Posterior cingulate gyrus (tissue), 11 donors: ENCODE measurements at regions of chr1 and their contacts with region 1.

Region 1: GRCh38 chr1:119367427-119368124 is 1.0 kb upstream of the HAO2 start:
- DNase-seq: no peak

Region 2: GRCh38 chr1:118151312-118151937 is 1216.2 kb before region 1 on chr1:
- intact Hi-C with region 1: loop called (anchors 1 kb)
- DNase-seq: peak in 6 of 10 donors; percentile 41 to 76 (median 57)

Region 3: DNA sequence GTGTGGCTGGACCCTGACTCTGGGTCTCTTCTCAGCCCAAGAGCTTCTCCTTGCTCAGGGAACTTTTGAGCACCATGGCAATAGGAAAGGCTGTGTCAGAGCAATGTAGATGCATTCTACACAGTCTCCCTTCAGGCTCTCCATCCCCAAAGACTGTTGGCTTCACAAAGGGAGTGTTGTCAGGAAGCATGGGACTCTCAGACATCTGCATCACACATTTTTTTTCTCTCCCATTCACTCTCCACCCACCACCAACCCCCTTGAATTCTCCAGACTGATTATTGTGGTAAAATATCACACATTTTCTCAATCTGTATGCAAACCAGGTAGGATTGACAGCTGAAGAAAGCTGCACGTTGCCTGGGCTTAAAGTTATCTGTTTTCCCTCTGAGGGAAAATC is 121.7 kb before region 1 on chr1:
- intact Hi-C with region 1: no loop called
- DNase-seq: no peak

Region 4: GRCh38 chr1:119286587-119287181 is 80.9 kb before region 1 on chr1:
- intact Hi-C with region 1: loop called (anchors 5 kb)
- DNase-seq: peak in 2 of 10 donors; percentile 3 to 16

Region 5: DNA sequence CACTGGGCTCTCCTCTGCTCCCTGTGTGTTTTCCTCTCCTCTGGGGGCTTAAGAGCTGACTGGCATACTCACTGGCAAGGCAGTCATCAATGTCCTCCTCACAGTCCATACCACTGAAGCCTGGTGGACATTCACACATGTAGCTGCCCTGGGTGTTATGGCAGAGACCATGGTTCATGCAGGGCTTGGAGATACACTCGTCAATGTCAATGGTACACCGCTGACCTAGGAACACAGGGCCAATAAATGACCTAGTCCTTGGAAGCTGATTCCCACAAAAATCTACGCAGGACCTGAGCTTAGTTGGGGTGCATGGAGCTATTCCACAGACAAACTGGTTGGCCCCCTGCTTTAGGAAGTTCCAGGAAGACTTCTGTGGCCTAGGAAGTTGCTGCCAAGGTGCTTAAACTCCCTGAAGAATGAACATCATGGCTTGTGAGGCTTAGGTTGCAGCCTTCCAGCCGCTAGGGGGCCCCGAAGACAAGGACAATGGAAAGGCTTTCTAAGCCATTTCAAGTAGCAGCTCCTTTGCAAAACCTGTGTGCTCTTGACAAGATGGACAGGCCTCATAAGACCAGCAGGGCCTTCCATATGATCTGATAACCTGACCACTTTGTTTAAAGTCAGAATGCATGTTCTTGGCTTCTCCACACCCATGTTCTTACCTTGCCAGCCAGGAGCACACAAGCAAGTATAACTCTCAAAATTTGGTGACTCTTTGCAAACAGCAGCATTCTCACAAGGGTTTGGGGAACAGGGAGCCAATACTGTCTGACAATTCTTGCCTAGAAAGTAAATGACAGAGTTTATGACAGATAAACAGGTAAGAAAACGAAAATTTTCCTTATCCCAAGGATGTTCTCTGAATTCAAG is 581.0 kb after region 1 on chr1:
- intact Hi-C with region 1: no loop called
- DNase-seq: peak; percentile 53 to 96 (median 80)